ENCODE measurements at regions of chr14 and their contacts with region 1.

Region 1: DNA sequence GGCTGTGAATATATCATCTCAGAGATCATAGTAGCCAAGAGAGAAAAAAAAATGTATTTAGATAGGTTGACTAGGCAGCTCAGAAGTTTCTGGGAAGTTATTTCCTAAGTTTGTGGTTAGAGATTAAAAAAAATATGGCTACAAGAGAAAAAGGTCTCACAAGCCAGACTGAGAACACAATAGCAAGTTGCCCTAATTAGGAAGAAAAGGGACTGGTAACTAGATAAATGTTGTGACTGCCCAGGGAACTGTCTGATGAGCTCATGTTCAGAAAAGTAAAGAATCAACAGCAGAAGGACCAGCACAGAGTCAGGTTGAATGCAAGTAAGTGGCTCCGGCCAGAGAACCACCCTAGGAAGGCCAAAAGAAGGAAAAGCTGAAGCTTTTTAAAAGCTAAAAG is 256.6 kb downstream of the PRKD1 start:
- DNase-seq: no peak

Region 2: DNA sequence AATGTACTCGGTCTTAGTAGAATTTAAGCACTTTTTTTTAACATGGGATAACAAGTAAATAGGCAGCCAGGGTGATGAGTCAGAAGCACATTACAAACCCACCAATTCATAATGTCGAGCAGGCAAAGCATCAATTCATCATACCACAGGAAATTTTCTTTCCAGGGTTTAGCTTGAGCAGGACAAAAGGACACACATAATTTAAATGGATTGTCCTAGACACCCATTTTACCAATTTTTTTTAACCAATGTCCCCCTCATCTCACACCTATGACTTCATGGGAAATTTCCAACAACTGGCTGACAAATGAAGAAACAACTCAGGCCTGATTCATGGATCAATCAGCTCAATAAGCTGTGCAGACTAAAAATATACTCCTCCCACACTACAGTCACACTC is 963.2 kb before region 1 on chr14:
- intact Hi-C with region 1: no loop called
- DNase-seq: no peak

Region 3: GRCh38 chr14:29255692-29256091 is 415.3 kb before region 1 on chr14:
- intact Hi-C with region 1: no loop called
- DNase-seq: no peak

Region 4: DNA sequence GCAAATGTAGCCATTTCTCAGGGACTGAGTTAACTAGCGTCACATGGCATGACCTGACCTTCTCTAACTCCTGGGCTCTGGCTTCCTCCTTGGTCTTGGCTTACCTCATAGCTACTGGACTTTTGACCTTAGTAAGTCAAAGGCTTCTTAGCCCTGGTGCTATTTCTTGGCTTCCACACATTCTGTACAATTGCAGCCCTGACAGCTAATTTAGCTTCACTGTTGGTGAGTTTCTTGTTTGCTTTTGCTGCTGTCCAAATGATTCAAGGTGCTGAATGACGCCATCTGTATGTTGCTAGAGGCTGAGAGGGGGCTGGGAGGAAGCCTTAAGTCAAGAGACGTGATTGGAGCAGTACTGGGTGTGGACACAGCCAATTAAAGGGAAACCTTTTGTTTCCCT is 54.0 kb after region 1 on chr14:
- intact Hi-C with region 1: loop called in 1 of 2 experiments (anchors 10 kb)
- DNase-seq: no peak

Region 5: DNA sequence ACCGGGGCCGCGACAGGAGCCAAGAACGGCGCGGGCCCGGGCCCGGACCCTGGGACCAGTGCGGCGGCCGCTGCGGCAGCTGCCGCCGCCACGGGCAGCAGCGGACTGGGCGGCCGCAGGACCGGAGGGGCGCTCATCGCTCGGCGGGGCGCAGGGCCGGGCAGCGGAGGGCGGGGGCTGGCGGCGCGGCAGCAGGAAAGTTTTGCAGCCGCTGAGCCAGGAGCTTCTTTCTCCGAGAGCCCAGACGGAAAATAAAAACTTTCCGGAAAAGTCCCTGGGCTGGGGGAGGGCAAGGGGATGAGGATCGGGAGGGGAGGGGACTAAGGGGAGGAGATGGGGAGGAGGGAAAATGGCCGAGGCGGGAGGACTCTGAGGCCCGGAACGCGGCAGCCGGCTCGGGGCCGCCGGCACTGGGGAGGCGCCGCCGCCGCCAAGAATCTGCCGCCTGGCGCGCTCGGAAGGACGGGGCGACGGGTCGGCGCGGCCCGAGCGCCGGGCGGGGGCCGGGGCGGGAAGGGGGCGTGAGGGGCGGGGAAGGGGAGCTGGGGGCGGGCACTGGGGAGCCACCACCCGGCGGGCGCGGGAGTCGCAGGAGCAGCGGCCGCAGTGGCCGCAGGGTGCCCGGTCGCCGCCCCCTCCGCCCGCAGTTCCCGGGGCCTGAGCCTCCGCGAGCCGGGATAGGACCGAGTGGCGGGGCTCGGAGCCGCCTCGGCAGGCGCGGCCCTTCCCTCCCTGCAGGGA is 256.5 kb after region 1 on chr14 and contains the start of gene PRKD1:
- intact Hi-C with region 1: loop called (anchors 5 to 10 kb)
- DNase-seq: peak; percentile 86
- total RNA-seq, gene PRKD1: 38.7 to 44.2 TPM

Measured in posterior vena cava (tissue), 2 donors.